GM23248 (cell line): ENCODE measurements at regions of chr17 and their contacts with region 1.

Region 1: DNA sequence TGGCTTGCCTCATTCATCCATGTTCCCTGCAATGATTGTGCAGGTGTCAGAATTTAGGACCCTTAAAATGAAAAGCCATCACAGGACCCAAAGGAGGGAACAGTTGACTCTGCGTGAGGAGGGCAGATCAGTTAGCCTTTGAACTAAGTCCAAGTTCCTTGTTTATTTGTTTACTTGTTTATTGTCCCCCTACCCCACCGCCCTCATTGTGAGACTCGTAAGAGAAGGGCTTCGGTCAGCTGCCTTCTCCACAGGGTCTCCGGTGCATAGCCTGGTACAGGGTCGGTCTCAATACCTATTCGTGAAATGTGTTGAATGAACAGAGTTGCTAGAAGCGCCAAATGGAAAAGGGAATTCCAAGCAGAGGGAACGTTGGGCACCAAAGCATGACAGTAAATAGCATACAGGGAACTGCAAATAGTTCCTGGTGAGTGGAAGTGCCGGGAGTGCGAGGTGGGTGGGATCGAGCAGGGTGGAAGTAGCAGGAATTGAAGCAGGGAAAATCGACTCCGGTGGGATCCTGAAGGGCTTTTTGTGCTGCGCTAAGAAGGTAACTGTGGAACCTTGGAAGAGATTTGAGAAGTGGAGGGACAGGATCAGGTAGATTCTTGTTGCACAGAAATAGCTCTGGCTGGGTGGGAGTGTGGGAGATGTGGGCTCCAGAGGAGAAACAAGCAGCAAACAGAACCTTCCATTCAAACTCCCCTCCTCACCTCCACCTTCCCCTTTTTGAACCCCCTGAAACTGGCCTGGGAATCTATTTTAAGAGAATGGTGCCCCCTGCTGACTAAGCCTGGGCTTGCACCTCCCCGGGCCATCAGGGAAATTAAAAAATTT is 12.7 kb downstream of the SLC35B1 start:
- DNase-seq: peak; percentile 50
- H3K4me3 ChIP-seq: no peak overlapping the region
- H3K27ac ChIP-seq: no peak overlapping the region
- H3K4me1 ChIP-seq: no peaks in the 10 kb centered on the region
- H3K27me3 ChIP-seq: no peaks in the 10 kb centered on the region

Region 2: GRCh38 chr17:49422714-49423113 is 272.4 kb before region 1 on chr17:
- in situ Hi-C with region 1: loop called (anchors 10 kb)
- DNase-seq: no peak
- H3K4me3 ChIP-seq: no peak overlapping the region
- H3K27ac ChIP-seq: no peak overlapping the region
- H3K4me1 ChIP-seq: no peaks in the 10 kb centered on the region
- H3K27me3 ChIP-seq: peaks cover 12% of the 10 kb centered on the region